H1 (cell line): ENCODE measurements at regions of chr5 and their contacts with region 1.

Region 1: DNA sequence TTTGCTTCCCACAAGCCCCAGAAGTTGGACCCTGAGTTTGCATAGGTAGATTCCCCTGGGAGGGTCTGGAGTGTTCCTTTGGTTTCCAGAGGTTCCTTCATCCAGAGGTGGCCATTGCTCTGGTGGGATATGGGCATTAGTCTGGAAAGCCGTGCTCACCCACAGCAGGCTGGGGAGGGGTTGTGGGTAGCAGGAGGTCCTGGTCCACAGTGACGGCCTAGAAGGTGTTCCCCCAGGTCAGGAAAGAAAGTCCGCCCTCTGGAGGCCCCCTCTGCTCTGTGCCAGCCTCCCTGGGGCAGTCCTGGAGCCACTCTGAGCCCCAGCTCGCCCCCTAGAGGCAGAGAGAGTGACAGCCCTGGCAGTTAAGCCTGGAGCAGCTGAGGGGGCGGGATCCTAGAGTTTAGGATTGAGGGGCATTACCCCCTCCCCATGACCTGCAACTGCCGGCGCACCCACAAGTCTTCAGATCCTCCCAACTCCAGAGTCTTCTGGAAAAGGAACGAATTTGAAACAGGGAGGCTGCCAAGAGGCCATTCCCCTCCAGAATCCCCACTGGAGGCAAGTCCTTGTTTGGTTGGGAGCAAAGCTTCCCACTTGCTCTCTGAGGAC is 36.8 kb downstream of the NDST1 start:
- DNase-seq: peak; percentile 67 to 97
- H3K4me3 ChIP-seq: no peak overlapping the region
- H3K27ac ChIP-seq: 0 out of 2 replicates have a peak overlapping the region, but pooled peaks have one; percentile 14
- H3K4me1 ChIP-seq: no peaks in the 10 kb centered on the region; a peak in 1 of 7 replicates
- H3K27me3 ChIP-seq: no peaks in the 10 kb centered on the region
- CTCF ChIP-seq: peak; percentile 99 to 100 (median 99)
- EP300 ChIP-seq: no peak
- POLR2A ChIP-seq: 0 out of 3 replicates have a peak, but pooled peaks of 1 of the 2 experiments have one; percentile 30
- RAD21 ChIP-seq: peak; percentile 81 to 89

Region 2: DNA sequence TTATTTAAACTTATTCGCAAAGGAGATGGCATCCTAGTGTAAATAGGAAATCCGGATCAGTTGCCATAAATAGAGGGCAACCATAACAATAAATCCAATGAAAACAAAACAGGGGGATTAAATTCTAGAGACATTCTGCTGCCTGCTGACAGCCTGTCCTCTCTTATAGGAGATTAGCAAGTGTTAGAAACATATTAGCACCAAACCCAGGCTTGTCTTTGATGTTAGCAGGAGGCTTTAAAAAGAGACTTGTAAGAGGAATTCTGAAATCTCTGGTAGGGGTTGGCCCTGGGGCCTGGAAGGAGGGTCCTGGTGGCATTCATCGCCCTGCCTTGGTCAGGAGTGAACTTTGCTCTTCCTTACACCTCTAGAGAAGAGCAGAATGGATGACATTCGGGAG is 15.2 kb before region 1 on chr5:
- CTCF ChIA-PET with region 1: interaction called, 22 read pairs
- POLR2A ChIA-PET with region 1: interaction called, 6 read pairs
- DNase-seq: no peak
- H3K4me3 ChIP-seq: no peak overlapping the region
- H3K27ac ChIP-seq: no peak overlapping the region
- H3K4me1 ChIP-seq: peaks cover 7 to 18% (median 13%) of the 10 kb centered on the region in 4 experiments
- H3K27me3 ChIP-seq: no peaks in the 10 kb centered on the region
- CTCF ChIP-seq: no peak
- EP300 ChIP-seq: no peak
- POLR2A ChIP-seq: no peak
- RAD21 ChIP-seq: no peak